ENCODE measurements at regions of chr21 and their contacts with region 1.

Region 1: DNA sequence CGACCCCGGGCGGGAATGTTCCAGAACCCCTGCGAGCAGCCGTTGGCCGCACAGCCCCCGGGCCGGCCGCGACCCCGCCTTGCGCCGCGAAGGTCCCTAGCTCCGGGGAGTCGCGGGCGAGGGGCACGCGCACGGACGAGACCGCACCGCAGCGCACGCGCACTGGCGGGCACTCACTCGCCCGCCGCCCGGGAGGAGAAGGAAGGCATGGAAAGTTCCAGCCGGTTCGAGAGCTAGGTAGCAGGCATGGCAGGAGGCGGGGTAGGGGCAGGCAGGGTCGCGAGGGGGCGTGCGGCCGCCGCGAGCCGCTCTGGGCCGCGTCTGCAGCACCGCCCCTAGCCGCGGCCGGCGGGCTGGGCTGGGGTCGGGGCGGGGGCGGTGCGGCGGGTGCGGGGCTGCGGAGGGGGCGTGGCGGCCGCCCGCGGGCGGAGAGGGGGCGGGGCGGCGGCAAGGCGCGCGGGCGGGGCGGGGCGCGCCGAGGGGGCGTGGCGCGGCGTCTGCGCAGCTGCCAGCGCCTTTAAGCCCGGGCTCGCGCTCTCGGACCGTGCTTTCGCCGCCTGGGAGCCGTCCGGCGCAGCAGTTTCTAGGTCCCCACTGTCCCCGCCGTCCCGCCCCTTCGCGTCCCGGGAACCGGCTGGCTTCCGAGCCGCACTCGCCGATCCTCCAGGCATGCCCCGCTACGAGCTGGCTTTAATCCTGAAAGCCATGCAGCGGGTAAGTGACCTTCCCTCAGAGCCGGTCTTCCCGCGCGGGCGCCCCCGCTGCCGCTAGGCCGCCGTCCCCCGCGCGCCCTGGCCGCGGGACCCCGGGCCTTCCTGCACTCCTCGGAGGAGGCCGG is at the starts of genes MRPS6 and SLC5A3:
- DNase-seq: peak; percentile 61 to 79
- H3K4me3 ChIP-seq: peak within 1 kb of the TSS; percentile 84
- H3K27ac ChIP-seq: no peak within 1 kb of the TSS
- H3K4me1 ChIP-seq: peaks cover 22% of the 10 kb centered on the region
- H3K27me3 ChIP-seq: no peaks in the 10 kb centered on the region
- CTCF ChIP-seq: no peak
- total RNA-seq, gene MRPS6: 40.4 and 41.0 TPM in 2 replicates
- total RNA-seq, gene SLC5A3: 7.0 and 8.8 TPM in 2 replicates

Region 2: DNA sequence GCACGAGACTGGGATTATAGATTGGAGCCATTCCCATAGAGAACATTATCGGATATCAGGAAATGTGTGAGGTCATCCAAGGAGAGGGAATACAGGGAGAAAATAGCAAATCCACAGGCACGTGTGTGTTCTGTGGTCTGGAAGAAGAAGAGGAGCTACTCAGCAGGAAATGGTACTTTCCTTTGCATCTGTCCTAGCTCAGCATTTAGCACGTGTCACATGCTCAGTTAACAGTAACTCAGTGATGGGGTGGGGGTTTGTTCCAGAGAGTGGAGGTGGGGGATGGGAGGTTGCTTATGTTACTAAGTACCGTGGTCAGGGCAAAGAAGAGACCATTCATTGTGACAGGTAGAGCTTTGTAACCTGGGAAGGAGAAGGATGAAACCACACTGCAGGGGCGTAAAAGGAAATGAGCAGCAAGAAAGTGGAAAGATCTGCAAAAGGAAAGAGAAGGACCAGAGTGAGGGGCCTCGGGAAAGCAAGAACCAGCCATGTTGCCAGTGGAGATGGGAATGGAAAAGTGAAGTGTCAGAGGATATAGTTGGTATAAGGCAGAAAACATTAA is 258.0 kb before region 1 on chr21:
- CTCF ChIA-PET with region 1: no interaction called
- POLR2A ChIA-PET with region 1: no interaction called
- intact Hi-C with region 1: no loop called
- DNase-seq: no peak
- H3K4me3 ChIP-seq: no peak overlapping the region
- H3K27ac ChIP-seq: no peak overlapping the region
- H3K4me1 ChIP-seq: no peaks in the 10 kb centered on the region
- H3K27me3 ChIP-seq: no peaks in the 10 kb centered on the region
- CTCF ChIP-seq: no peak

Region 3: DNA sequence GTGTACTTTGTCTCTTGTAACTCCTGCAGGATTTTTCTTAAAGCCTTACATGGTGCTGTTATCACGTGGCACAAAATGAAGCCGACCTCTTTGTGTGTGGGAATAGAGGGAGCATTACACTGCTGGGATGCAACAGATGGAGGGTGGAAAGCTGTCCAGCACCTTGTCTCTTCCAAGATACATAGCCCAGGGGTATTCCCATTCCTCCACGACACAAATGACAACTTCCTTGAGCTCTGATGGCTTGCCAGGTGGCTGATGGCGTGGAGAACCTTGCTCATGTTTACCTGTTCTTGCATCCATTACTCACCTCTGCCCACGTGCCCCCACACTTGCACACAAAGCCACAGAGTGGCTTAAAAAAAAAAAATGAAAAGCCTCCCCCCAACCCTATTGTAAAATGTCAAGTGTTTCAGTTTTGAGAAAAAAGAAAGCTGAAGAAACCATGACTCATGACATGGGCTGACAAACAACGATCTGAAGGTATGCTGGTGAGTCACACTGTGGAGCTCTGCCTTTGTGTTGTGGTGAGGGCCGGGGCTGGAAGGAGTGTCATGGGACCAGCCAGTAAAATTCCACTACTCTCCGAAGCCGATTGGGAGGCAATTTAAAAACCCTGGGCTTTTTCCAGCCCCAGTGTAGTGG is 125.7 kb before region 1 on chr21:
- CTCF ChIA-PET with region 1: interaction called, 3 read pairs
- POLR2A ChIA-PET with region 1: no interaction called
- intact Hi-C with region 1: loop called (anchors 5 kb)
- DNase-seq: peak; percentile 83 to 97
- H3K4me3 ChIP-seq: peak overlapping the region; percentile 40; the same call in 1 of the 2 replicates
- H3K27ac ChIP-seq: peak overlapping the region; percentile 69
- H3K4me1 ChIP-seq: peaks cover 17% of the 10 kb centered on the region
- H3K27me3 ChIP-seq: no peaks in the 10 kb centered on the region
- CTCF ChIP-seq: no peak

Region 4: DNA sequence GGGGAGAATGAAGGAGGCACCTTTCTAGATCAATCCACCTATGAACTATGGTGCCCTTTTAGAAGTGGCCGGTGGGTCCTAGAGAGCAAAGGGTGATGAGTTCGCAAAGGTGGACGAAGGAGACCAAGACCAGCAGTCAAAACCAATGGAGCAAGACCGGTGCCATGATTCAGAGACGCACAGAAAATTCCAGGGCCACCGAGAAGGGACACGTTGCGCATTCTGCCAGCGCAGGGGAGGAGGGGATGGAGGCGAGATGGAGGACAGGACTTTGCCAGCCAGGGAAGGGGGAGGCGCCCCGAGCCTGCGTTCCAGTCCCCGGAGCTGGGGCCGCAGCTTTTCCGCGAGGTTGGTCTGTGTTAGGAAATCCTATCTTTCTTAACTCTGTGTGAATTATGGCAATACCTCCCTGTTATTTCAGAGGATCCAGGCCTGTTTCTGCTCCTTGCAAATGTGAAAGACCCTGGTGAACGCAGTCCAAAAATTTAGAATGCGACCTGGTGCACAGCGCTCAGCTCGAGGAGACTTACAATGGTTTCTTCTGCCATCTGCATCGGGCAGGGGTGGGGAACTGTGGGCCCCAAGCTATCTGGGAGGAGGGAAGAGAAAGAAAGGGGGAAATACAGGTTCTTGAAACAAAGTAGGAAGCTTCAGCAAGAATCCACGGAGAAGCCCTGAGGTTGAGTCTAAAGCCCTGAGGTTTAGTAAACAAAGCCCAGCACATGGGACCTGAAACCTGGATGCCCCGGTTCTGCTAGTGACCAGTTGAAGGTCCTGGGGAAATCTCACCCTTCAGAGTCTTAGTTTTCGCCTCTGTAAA is 129.5 kb after region 1 on chr21:
- CTCF ChIA-PET with region 1: no interaction called
- POLR2A ChIA-PET with region 1: no interaction called
- intact Hi-C with region 1: loop called (anchors 10 kb)
- DNase-seq: no peak
- H3K4me3 ChIP-seq: no peak overlapping the region
- H3K27ac ChIP-seq: no peak overlapping the region
- H3K4me1 ChIP-seq: no peaks in the 10 kb centered on the region
- H3K27me3 ChIP-seq: no peaks in the 10 kb centered on the region
- CTCF ChIP-seq: no peak

Region 5: GRCh38 chr21:34745557-34746255 is 672.5 kb after region 1 on chr21:
- CTCF ChIA-PET with region 1: no interaction called
- POLR2A ChIA-PET with region 1: no interaction called
- intact Hi-C with region 1: no loop called
- DNase-seq: peak; percentile 56
- H3K4me3 ChIP-seq: no peak overlapping the region
- H3K27ac ChIP-seq: no peak overlapping the region
- H3K4me1 ChIP-seq: peaks cover 12% of the 10 kb centered on the region
- H3K27me3 ChIP-seq: no peaks in the 10 kb centered on the region
- CTCF ChIP-seq: peak; percentile 86